Right cardiac atrium (tissue), 5 donors: ENCODE measurements at regions of chr3 and their contacts with region 1.

Region 1: DNA sequence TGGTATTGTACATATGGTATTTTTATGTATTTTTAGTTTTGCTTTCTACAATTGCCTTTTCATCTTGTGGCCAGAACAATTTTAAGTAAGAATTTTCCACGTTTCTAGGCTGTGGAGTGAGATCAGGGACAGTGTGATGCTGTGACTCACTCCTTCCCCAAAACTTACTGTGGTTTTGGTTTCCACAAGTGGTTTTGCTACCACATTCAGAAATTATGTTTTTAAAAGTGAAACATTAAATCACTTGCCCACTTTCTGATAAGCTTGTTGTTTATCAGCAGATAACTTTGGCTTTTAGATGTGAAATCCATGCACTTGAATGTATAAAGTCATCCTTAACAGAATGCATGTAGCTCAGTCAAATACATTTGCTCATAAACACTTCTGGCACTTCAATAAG is 192.2 kb upstream of the THRB start:
- DNase-seq: no peak
- ATAC-seq: no peak
- H3K4me3 ChIP-seq: no peak overlapping the region
- H3K27ac ChIP-seq: no peak overlapping the region
- H3K4me1 ChIP-seq: no peaks in the 10 kb centered on the region
- H3K27me3 ChIP-seq: no peaks in the 10 kb centered on the region

Region 2: GRCh38 chr3:24004171-24004938 is 682.5 kb before region 1 on chr3:
- intact Hi-C with region 1: loop called (anchors 5 to 10 kb)
- DNase-seq: no peak
- ATAC-seq: no peak
- H3K4me3 ChIP-seq: no peak overlapping the region
- H3K27ac ChIP-seq: no peak overlapping the region
- H3K4me1 ChIP-seq: no peaks in the 10 kb centered on the region
- H3K27me3 ChIP-seq: no peaks in the 10 kb centered on the region